Mammary epithelial cell (primary cell): ENCODE measurements at regions of chr15 and their contacts with region 1.

Region 1: GRCh38 chr15:74816808-74817674 is 4.4 kb downstream of the LMAN1L start:
- DNase-seq: peak; percentile 77
- H3K4me3 ChIP-seq: no peak overlapping the region
- H3K27ac ChIP-seq: no peak overlapping the region
- H3K4me1 ChIP-seq: peaks cover 22% of the 10 kb centered on the region
- H3K27me3 ChIP-seq: no peaks in the 10 kb centered on the region
- CTCF ChIP-seq: peak; percentile 30 to 78

Region 2: GRCh38 chr15:74781431-74782258 is 35.4 kb before region 1 on chr15 and contains the start of gene CSK:
- CTCF ChIA-PET with region 1: interaction called, 3 read pairs
- dilution Hi-C with region 1: loop called (anchors 5 kb)
- in situ Hi-C with region 1: no loop called
- intact Hi-C with region 1: no loop called
- DNase-seq: peak; percentile 49
- H3K4me3 ChIP-seq: peak within 1 kb of the TSS; percentile 67 to 79 (median 77)
- H3K27ac ChIP-seq: peak within 1 kb of the TSS; percentile 39
- H3K4me1 ChIP-seq: peaks cover 42% of the 10 kb centered on the region
- H3K27me3 ChIP-seq: no peaks in the 10 kb centered on the region
- CTCF ChIP-seq: peak; percentile 32 to 58
- total RNA-seq, gene CSK: 23.2 to 64.6 TPM

Region 3: DNA sequence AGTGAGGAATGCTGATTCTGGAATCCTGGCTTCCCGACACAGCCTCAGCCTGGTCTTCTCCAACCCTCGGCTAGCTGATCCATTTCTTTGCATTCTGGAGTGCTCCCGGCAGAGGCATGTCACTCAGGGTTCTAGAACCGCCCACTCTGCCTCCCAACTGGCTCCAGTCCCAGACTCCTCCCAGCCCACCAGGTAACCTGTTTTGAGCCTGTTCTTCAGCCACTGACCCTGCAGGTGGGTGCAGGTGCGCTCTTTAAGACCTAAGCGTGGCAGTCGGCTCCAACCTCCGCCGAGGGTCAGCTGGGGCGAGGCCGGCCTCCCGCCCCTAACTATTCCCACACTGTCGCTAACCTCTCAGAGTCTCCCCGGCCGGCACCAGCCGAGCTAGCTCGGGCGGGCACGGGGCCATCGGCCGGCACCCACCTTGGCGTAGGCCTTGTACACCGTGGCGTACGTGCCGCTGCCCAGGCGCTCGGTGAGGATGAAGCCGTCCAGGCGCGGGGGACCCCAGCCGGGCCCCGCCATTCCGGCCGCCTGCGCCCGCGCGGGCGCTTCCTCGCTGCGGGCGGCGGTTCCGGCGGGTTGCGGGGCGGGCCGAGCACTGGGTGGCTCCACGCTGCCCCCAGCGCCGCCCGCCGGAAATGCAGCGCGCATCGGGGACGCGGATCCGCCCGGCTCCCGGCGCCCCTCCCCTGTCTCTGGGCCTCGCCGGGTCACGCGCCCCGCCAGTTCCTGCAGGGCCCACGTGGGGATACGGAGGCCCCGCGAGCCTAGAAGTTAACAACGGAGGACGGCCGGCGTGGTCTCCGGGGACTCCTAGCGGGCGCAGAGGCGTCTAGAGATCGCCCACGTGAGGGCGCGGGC is 25.8 kb after region 1 on chr15 and contains the start of gene ULK3:
- CTCF ChIA-PET with region 1: no interaction called
- dilution Hi-C with region 1: no loop called
- in situ Hi-C with region 1: no loop called
- intact Hi-C with region 1: loop called (anchors 2 kb)
- DNase-seq: peak; percentile 82
- H3K4me3 ChIP-seq: peak within 1 kb of the TSS; percentile 78 to 98 (median 89)
- H3K27ac ChIP-seq: peak within 1 kb of the TSS; percentile 49
- H3K4me1 ChIP-seq: peaks cover 8% of the 10 kb centered on the region
- H3K27me3 ChIP-seq: no peaks in the 10 kb centered on the region
- CTCF ChIP-seq: peak; percentile 39 to 56
- total RNA-seq, gene ULK3: 20.0 to 26.3 TPM

Region 4: DNA sequence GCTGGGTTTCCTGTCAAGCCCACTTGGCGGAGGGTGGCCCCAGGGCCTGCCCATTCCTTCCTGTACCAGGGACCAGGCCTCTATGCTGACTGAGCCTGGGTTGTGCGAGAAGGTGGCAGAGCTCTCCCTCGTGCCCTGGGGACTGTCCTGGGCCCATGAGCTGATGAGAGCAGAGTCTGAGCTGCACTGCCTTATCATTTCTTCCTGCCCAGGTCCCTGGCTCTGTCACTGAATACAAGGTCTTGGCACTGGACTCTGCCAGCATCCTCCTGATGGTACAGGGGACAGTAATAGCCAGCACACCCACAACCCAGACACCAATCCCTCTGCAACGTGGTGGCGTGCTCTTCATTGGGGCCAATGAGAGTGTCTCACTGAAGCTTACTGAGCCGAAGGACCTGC is 80.3 kb after region 1 on chr15:
- CTCF ChIA-PET with region 1: interaction called, 3 read pairs
- dilution Hi-C with region 1: loop called (anchors 5 kb)
- in situ Hi-C with region 1: no loop called
- intact Hi-C with region 1: loop called (anchors 1 kb)
- DNase-seq: no peak
- H3K4me3 ChIP-seq: no peak overlapping the region
- H3K27ac ChIP-seq: no peak overlapping the region
- H3K4me1 ChIP-seq: peaks cover 11% of the 10 kb centered on the region
- H3K27me3 ChIP-seq: no peaks in the 10 kb centered on the region
- CTCF ChIP-seq: no peak

Region 5: DNA sequence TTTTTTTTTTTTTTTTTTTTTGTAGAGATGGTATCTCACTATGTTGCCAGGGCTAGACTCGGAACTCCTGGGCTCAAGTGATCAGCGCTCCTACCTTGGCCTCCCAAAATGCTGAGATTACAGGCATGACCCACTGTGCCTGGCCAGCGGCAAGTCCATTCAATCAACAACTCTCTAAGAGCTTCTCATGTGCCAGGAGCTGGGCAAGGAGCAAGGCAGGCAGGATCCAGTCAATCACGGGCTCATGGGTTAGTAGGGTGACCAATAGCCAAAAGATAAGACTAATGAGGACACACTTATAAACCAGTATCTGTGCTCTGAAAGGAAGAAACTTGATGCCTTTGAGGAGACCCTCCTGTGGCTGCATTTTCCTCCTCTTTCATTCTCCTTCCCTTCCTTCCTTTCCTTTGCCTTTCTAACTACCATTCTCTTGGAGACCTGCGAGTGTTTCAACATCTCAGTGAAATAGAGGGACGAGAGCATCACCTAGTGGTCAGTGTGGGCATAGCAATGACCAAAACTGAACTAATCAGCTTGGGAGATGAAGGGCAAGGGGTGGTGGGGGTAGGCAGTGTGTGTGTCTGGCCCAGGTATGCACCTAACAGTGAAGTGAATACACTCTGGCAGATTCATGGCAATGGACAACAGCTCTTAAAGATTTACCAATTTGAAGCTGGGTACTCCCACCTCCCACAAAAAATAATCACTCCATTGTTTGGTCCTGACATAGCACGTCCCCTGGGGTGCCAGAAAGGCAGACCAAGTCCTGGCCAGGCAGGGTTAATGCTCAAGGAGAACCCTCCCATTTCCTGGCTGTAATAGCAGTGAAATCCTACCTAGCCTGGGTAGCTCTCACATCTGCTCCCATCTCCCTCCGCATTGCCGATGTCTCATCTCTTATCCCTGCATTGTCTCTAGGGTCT is 133.3 kb after region 1 on chr15:
- CTCF ChIA-PET with region 1: interaction called, 3 read pairs
- dilution Hi-C with region 1: no loop called
- in situ Hi-C with region 1: no loop called
- intact Hi-C with region 1: loop called (anchors 1 kb)
- DNase-seq: peak; percentile 59
- H3K4me3 ChIP-seq: no peak overlapping the region
- H3K27ac ChIP-seq: no peak overlapping the region
- H3K4me1 ChIP-seq: no peaks in the 10 kb centered on the region
- H3K27me3 ChIP-seq: no peaks in the 10 kb centered on the region
- CTCF ChIP-seq: peak; percentile 99 to 100